ENCODE measurements at regions of chr14 and their contacts with region 1.

Region 1: DNA sequence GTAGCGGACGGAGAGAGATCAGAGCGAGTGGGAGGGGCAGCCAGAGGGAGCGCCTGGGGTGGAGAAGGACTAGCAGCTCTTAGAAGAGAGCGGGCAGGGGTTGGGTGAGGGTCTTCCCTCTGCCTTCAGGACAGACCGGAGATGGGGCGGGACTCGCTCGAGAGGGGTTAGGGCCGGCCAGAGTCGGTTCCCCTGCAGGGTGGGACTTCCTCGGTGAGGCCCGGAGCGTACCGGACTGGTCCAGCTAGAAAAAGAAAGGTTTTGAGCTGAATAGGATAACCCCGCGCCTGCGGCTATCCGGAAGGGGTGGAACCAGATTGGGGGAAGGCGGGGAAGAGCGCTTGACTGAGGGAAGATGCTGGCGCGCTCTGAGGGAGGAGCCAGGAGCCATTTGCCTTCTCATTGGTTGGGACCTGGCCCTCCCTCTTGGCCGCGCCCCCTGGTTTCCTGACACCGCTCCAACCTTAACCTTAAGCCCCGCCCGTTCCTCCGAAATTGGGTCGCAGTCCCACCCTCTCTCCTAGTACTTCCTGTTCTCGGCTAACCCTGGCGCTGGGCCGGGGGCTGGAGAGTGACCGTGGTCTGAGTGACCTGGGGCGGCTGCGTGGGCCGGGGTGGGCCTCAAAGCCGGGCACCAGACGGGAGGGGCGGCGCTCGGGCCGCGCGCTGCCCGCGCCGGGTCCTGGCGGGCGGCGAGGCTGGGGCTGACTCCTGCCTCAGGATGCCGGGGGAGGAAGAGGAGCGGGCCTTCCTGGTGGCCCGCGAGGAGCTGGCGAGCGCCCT is at the start of gene RNF31:
- DNase-seq: peak; percentile 88 to 98 (median 96)
- ATAC-seq: peak; percentile 95
- H3K4me3 ChIP-seq: peak within 1 kb of the TSS; percentile 98
- H3K4me3 Mint-ChIP-seq: peak within 1 kb of the TSS; percentile 91 to 100 (median 98)
- H3K27ac ChIP-seq: peak within 1 kb of the TSS; percentile 88
- H3K27ac Mint-ChIP-seq: peak within 1 kb of the TSS; percentile 94 to 98 (median 96)
- H3K4me1 ChIP-seq: peaks cover 35 to 47% of the 10 kb centered on the region in 2 donors
- H3K4me1 Mint-ChIP-seq: peaks cover 39 to 73% (median 61%) of the 10 kb centered on the region in 7 donors
- H3K27me3 ChIP-seq: no peaks in the 10 kb centered on the region
- H3K27me3 Mint-ChIP-seq: no peaks in the 10 kb centered on the region
- total RNA-seq, gene RNF31: 64.0 to 151 (median 95.4) TPM

Region 2: GRCh38 chr14:24108336-24108874 is 38.8 kb before region 1 on chr14:
- CTCF ChIA-PET with region 1: interaction called, 12 read pairs
- POLR2A ChIA-PET with region 1: interaction called, 87 read pairs
- intact Hi-C with region 1: no loop called
- DNase-seq: no peak
- ATAC-seq: peak; percentile 21
- H3K4me3 ChIP-seq: no peak overlapping the region
- H3K4me3 Mint-ChIP-seq: peak overlapping the region; percentile 3 to 68 (median 46)
- H3K27ac ChIP-seq: peak overlapping the region; percentile 66
- H3K27ac Mint-ChIP-seq: peak overlapping the region; percentile 90 to 97 (median 94)
- H3K4me1 ChIP-seq: peaks cover 11 to 12% of the 10 kb centered on the region in 2 donors
- H3K4me1 Mint-ChIP-seq: peaks cover 9 to 28% (median 13%) of the 10 kb centered on the region in 7 donors
- H3K27me3 ChIP-seq: no peaks in the 10 kb centered on the region
- H3K27me3 Mint-ChIP-seq: no peaks in the 10 kb centered on the region

Region 3: DNA sequence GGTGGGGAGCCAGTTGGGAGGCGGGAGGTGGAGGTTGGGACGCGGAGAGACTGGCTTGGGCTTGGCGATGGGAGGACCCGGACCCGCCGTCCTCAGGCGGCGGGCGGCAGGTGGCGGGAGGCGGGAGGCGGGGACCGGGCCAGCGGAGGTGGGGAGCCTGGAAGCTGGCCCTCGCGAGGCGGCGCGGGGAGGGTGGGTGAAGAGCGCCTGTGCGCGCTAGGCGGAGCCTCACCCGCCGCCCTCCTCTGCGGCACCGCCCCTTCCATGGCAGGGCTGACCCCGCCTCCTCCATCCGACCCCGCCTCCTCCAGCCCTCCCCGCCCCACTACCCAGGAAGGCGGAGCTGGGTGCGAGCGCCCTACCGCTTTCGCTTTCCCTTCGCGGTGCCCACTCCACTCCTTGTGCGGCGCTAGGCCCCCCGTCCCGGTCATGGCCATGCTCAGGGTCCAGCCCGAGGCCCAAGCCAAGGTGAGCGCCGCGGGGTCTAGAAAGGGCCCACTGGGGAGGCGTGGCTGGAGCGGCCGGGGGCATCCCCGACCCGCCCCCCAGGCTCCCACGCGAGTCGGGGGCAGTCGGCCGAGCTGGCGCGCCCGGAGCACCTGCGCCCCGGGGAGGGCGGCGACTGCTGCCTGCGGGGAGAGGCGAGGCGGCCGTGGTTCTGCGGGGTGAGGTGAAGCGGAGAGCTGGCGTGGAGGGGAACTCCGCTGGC is 11.2 kb before region 1 on chr14 and contains the start of gene PSME1:
- CTCF ChIA-PET with region 1: no interaction called
- POLR2A ChIA-PET with region 1: interaction called, 139 read pairs
- intact Hi-C with region 1: loop called (anchors 1 kb)
- DNase-seq: peak; percentile 88 to 97 (median 92)
- ATAC-seq: peak; percentile 99
- H3K4me3 ChIP-seq: peak within 1 kb of the TSS; percentile 83
- H3K4me3 Mint-ChIP-seq: peak within 1 kb of the TSS; percentile 88 to 95 (median 92)
- H3K27ac ChIP-seq: peak within 1 kb of the TSS; percentile 97
- H3K27ac Mint-ChIP-seq: peak within 1 kb of the TSS; percentile 86 to 98 (median 93)
- H3K4me1 ChIP-seq: peaks cover 16 to 37% of the 10 kb centered on the region in 2 donors
- H3K4me1 Mint-ChIP-seq: peaks cover 48 to 71% (median 64%) of the 10 kb centered on the region in 7 donors
- H3K27me3 ChIP-seq: no peaks in the 10 kb centered on the region
- H3K27me3 Mint-ChIP-seq: no peaks in the 10 kb centered on the region
- total RNA-seq, gene PSME1: 189 to 583 (median 202) TPM

Region 4: DNA sequence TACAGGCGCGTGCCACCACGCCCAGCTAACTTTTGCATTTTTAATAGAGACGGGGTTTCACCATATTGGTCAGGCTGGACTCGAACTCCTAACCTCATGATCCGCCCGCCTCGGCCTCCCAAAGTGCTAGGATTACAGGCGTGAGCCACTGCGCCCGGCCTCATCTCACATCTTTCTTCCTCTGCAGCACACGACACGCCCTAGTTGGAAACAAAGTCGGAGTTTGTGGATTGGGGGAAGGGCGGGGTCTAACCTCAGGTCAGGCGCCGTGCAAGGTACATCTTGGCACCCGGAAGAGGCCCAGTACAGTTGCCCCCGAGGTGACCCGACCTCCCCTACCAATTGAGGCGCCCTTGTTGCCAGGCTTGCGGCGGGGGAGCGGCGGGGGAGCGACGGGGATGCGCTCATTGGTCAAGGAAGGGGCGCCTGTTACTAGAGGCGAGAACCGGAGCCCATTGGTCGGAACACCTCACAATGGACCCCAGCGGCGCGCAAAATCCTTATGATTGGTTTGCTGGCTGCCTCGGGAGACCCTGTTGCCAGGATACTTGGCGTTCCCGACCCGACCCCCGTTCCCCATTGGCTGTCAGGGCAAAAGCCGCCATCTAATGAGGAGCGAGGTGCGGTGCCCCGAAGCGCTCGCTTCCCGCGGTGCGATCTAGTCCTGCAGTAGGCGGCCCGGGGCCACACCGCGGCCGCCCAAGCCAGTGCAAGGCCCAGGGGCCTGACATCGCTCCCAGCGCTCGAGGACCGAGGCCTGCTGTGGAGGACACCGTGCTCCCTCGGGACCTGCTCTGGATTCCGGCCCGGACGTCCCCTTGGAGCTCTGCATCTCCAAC is 24.5 kb after region 1 on chr14 and contains the start of gene REC8:
- CTCF ChIA-PET with region 1: no interaction called
- POLR2A ChIA-PET with region 1: no interaction called
- intact Hi-C with region 1: loop called in 1 of 2 experiments (anchors 1 kb)
- DNase-seq: peak in 8 of 9 donors; percentile 43 to 81 (median 76)
- ATAC-seq: peak; percentile 88
- H3K4me3 ChIP-seq: peak within 1 kb of the TSS; percentile 58
- H3K4me3 Mint-ChIP-seq: peak within 1 kb of the TSS; percentile 80 to 94 (median 88)
- H3K27ac ChIP-seq: peak within 1 kb of the TSS; percentile 40
- H3K27ac Mint-ChIP-seq: peak within 1 kb of the TSS; percentile 48 to 93 (median 80)
- H3K4me1 ChIP-seq: peaks cover 0 to 13% of the 10 kb centered on the region in 2 donors
- H3K4me1 Mint-ChIP-seq: peaks cover 12 to 53% (median 43%) of the 10 kb centered on the region in 7 donors
- H3K27me3 ChIP-seq: no peaks in the 10 kb centered on the region
- H3K27me3 Mint-ChIP-seq: no peaks in the 10 kb centered on the region
- total RNA-seq, gene REC8: 20.3 to 80.5 (median 68.6) TPM

Region 5: DNA sequence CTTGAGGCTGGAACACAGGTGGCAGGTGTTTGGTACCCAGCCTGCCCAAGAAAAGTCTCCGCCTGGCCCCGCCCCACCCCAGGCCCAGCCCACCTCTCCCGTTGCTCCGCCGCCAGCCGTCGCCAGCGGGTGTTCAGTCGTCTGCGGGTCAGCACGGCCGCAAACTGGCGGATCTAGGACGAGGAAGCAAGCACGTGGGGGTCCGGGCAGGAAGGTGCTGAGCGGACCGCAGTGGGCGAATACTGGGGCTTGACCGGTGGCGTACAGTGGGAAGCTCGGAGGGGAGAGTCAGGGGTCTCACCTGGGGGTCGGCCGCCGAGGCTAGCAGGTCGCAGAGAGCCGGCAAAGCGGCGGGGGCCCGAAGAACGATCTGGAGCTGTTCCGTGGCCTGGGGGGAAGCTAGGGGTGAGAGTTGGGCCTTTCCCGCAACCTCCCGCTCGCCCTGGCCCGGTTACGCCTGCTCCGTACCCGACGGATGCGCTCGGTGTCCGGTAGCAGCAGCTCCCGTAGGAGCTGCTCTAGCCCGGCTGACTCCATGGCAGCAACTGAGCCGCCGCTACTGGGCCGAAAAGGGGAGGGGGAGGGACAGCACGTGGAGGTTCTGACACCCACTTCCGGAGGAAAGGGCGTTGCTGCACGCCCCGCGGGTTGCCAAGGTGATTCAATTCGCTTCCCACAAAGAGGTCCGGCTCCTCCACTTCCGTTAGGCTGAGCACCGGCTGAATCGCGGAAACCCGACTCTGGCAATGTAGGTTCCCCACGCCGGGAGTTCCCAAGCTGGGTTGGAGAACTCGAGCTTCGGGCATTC is 41.3 kb after region 1 on chr14 and contains the start of gene IPO4:
- CTCF ChIA-PET with region 1: no interaction called
- POLR2A ChIA-PET with region 1: interaction called, 5 read pairs
- intact Hi-C with region 1: loop called (anchors 1 kb)
- DNase-seq: peak; percentile 75 to 97 (median 94)
- ATAC-seq: peak; percentile 97
- H3K4me3 ChIP-seq: peak within 1 kb of the TSS; percentile 89
- H3K4me3 Mint-ChIP-seq: peak within 1 kb of the TSS; percentile 89 to 96 (median 90)
- H3K27ac ChIP-seq: peak within 1 kb of the TSS; percentile 83
- H3K27ac Mint-ChIP-seq: peak within 1 kb of the TSS; percentile 82 to 96 (median 92)
- H3K4me1 ChIP-seq: peaks cover 15 to 16% of the 10 kb centered on the region in 2 donors
- H3K4me1 Mint-ChIP-seq: peaks cover 24 to 53% (median 47%) of the 10 kb centered on the region in 7 donors
- H3K27me3 ChIP-seq: no peaks in the 10 kb centered on the region
- H3K27me3 Mint-ChIP-seq: no peaks in the 10 kb centered on the region
- total RNA-seq, gene IPO4: 21.5 to 45.2 (median 42.2) TPM

Region 6: GRCh38 chr14:24195191-24196070 is 48.3 kb after region 1 on chr14 and contains the start of gene TM9SF1:
- CTCF ChIA-PET with region 1: no interaction called
- POLR2A ChIA-PET with region 1: interaction called, 9 read pairs
- intact Hi-C with region 1: loop called in 1 of 2 experiments (anchors 1 kb)
- DNase-seq: peak; percentile 86 to 92 (median 90)
- ATAC-seq: peak; percentile 90
- H3K4me3 ChIP-seq: peak within 1 kb of the TSS; percentile 74
- H3K4me3 Mint-ChIP-seq: peak within 1 kb of the TSS; percentile 88 to 97 (median 93)
- H3K27ac ChIP-seq: peak within 1 kb of the TSS; percentile 99
- H3K27ac Mint-ChIP-seq: peak within 1 kb of the TSS; percentile 88 to 98 (median 98)
- H3K4me1 ChIP-seq: peaks cover 14 to 16% of the 10 kb centered on the region in 2 donors
- H3K4me1 Mint-ChIP-seq: peaks cover 38 to 69% (median 59%) of the 10 kb centered on the region in 7 donors
- H3K27me3 ChIP-seq: no peaks in the 10 kb centered on the region
- H3K27me3 Mint-ChIP-seq: no peaks in the 10 kb centered on the region
- total RNA-seq, gene TM9SF1: 16.2 to 40.5 (median 19.2) TPM

Region 7: DNA sequence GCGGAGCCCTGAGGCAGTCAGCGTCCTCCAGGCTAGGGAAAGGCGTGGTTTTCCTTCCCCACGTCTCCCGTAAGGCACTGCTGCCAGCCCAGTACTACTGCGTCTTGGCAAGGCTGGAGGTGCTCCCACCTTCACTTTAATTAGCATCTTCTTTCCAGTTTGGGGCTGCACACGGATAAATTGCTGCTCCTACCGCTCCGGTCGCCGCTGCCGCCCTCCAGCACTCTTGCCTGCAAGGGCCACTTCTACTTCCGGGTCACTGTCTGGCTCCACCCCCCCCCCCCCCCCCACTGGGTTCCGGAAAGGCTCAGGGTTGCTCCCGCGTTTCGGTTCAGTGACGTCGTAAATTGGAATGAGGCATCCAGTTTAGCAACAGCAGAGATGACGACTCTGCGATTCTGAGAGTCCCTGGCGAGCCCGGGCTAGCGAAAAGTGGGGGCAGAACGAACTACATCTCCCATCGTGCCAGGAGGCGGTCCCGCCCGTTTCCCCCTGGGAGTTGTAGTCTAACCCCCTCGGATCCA is 85.0 kb after region 1 on chr14 and contains the start of gene NEDD8:
- CTCF ChIA-PET with region 1: no interaction called
- POLR2A ChIA-PET with region 1: no interaction called
- intact Hi-C with region 1: loop called (anchors 1 kb)
- DNase-seq: peak; percentile 72 to 91 (median 88)
- ATAC-seq: peak; percentile 91
- H3K4me3 ChIP-seq: peak within 1 kb of the TSS; percentile 99
- H3K4me3 Mint-ChIP-seq: peak within 1 kb of the TSS; percentile 86 to 100 (median 96)
- H3K27ac ChIP-seq: peak within 1 kb of the TSS; percentile 89
- H3K27ac Mint-ChIP-seq: peak within 1 kb of the TSS; percentile 89 to 98 (median 93)
- H3K4me1 ChIP-seq: peaks cover 11 to 27% of the 10 kb centered on the region in 2 donors
- H3K4me1 Mint-ChIP-seq: peaks cover 36 to 79% (median 63%) of the 10 kb centered on the region in 7 donors
- H3K27me3 ChIP-seq: no peaks in the 10 kb centered on the region
- H3K27me3 Mint-ChIP-seq: no peaks in the 10 kb centered on the region
- total RNA-seq, gene NEDD8: 73.5 to 175 (median 106) TPM